Calu3 (cell line): ENCODE measurements at regions of chr12 and their contacts with region 1.

Region 1: DNA sequence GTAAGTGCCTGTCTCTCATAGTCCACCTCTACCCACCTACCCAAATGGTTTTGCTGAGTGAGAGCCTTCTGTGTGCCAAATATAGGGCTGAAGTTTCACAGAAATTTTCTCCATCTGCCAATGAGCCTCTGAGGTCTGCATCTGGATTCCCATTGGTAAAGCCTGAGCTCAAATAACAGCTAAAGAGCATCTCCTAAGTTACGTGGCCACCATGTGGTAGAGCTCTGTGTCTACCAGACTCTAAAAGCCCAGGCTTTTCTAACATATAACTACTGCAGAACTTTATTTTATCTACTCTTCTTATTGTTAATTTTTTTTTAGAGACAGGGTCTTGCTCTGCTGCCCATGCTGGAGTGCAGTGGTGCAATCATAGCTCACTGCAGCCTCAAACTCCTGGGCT is 16.0 kb downstream of the AMDHD1 start:
- DNase-seq: peak; percentile 6
- H3K4me3 Mint-ChIP-seq: no peak overlapping the region
- H3K27ac Mint-ChIP-seq: no peak overlapping the region
- H3K4me1 Mint-ChIP-seq: no peaks in the 10 kb centered on the region
- H3K27me3 Mint-ChIP-seq: no peaks in the 10 kb centered on the region
- CTCF ChIP-seq: no peak

Region 2: DNA sequence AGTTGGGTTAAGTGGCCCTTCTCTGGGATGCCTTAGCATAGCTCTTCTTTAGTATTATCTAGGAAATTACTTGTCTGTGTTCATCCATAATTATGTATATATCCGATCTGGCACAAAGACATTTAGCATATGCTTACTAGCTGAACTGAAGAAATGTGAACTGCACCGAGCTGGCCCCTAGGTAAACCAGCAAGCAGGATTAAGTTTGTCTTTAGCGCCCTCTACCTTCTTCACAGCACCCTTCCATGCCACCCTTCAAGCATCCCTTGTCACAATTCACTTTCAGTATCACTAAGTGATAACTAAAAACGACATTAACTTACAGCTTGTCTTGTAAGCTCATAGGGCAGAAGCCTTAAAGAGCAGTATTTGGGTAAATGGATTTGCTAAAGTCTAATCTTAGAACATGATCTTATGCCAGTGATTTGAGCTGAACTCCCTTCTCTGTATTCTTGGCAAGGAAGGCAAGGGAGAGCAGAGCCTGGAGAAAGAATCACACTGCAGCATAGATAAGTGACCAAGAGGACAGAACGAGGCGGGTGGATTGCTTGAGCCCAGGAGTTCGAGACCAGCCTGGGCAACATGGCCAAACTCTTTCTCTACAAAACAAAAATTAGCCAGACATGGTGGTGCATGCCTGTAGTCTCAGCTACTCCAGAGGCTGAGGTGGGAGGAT is 39.6 kb after region 1 on chr12:
- CTCF ChIA-PET with region 1: interaction called, 3 read pairs
- intact Hi-C with region 1: loop called (anchors 5 kb)
- DNase-seq: peak; percentile 54
- H3K4me3 Mint-ChIP-seq: no peak overlapping the region
- H3K27ac Mint-ChIP-seq: no peak overlapping the region
- H3K4me1 Mint-ChIP-seq: peaks cover 33% of the 10 kb centered on the region
- H3K27me3 Mint-ChIP-seq: no peaks in the 10 kb centered on the region
- CTCF ChIP-seq: peak; percentile 46